Activated B cell treated with CpG ODN at 0.5 μM for 24 hours (primary cell): ENCODE measurements at regions of chr17 and their contacts with region 1.

Region 1: GRCh38 chr17:385926-386876 is 33.6 kb upstream of the RPH3AL start:
- DNase-seq: peak; percentile 74
- ATAC-seq: peak; percentile 85
- H3K4me3 Mint-ChIP-seq: peak overlapping the region; percentile 82
- H3K27ac Mint-ChIP-seq: no peak overlapping the region
- H3K4me1 Mint-ChIP-seq: peaks cover 18% of the 10 kb centered on the region
- H3K27me3 Mint-ChIP-seq: peaks cover 21% of the 10 kb centered on the region
- CTCF ChIP-seq: no peak

Region 2: DNA sequence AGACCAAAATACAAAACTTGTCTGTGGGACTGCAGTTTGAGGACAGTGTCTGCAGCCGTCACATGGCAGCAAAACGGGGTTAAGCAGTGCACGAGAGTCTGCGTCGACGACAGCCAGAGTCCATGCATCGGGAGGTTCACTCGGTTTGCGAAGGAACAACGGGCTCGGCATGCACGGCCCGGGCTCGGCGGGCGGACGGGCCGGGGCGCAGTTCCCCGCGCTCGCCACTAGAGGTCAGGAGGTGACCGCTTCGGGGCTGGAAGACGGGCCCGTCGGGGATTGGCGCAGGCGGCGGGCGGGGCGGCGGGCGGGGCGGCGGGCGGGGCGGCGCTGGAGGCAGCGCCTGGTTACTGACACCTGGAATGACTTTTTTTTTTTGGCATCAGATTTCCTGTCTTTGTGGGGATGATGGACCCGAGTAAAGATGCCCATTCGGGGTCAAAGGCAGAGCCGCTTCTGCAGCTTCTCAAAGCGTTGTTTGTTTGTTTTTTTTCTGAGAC is 242.4 kb before region 1 on chr17:
- CTCF ChIA-PET with region 1: interaction called, 3 read pairs
- POLR2A ChIA-PET with region 1: no interaction called
- intact Hi-C with region 1: loop called (anchors 2 kb)
- DNase-seq: peak; percentile 82
- ATAC-seq: peak; percentile 98
- H3K4me3 Mint-ChIP-seq: no peak overlapping the region
- H3K27ac Mint-ChIP-seq: no peak overlapping the region
- H3K4me1 Mint-ChIP-seq: peaks cover 4% of the 10 kb centered on the region
- H3K27me3 Mint-ChIP-seq: peaks cover 3% of the 10 kb centered on the region
- CTCF ChIP-seq: peak; percentile 42